ENCODE measurements at regions of chr5 and their contacts with region 1.

Region 1: GRCh38 chr5:33433303-33434240 is 7.2 kb upstream of the TARS1 start:
- DNase-seq: no peak
- ATAC-seq: no peak
- H3K4me3 ChIP-seq: no peak overlapping the region
- H3K4me3 Mint-ChIP-seq: no peak overlapping the region
- H3K27ac ChIP-seq: no peak overlapping the region
- H3K27ac Mint-ChIP-seq: no peak overlapping the region
- H3K4me1 ChIP-seq: peaks cover 0 to 3% of the 10 kb centered on the region in 2 donors
- H3K4me1 Mint-ChIP-seq: peaks cover 5% of the 10 kb centered on the region
- H3K27me3 ChIP-seq: no peaks in the 10 kb centered on the region
- H3K27me3 Mint-ChIP-seq: peaks cover 5% of the 10 kb centered on the region
- CTCF ChIP-seq: no peak

Region 2: DNA sequence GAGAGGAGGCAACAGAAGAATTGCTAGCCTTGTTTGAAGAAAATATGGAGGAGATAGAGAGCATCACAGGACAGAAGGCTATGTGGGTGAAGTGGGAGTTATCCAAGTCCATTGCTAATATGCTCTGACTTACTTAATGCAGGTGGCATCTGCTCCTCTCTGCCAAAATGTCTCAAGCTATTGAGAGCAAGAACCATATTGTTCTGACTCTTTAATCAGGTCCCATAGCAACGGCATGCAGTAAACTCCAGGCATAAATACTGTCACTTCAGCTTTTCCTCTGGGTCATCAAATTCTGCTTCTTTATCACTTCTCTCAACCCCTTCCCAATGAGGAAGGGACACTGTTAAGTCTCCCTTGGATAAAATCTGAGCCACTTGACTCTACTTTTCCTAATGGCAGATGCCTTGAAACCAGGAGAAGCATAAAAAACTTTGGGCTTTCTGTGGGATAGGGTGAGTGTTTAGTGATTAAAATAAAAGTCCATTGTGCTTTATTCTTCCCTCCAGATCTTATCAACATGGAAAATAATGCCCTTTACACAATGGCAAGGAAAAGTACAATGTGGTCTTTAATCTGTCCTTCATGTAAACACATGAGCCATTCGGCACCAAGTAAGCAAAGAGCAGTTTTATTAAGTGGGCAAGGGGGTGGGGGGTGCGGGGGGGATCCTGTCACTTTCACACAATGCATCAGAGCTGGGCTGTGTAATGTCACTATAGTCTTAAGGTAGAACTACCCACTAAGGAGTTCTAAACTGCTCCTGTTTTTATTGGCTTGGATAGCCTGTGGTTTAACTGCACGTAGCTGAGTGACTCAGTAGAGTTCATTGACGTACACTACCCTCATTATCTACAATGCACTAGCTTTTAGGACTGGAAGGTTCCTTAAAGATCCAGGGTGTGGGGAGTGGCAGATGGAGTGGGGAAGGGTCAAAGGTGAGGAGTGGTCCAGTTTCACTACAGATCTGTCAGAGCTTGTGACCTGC is 63.8 kb before region 1 on chr5:
- CTCF ChIA-PET with region 1: no interaction called
- POLR2A ChIA-PET with region 1: no interaction called
- intact Hi-C with region 1: no loop called
- DNase-seq: no peak
- ATAC-seq: no peak
- H3K4me3 ChIP-seq: no peak overlapping the region
- H3K4me3 Mint-ChIP-seq: no peak overlapping the region
- H3K27ac ChIP-seq: no peak overlapping the region
- H3K27ac Mint-ChIP-seq: no peak overlapping the region
- H3K4me1 ChIP-seq: peaks cover under 1 to 1% of the 10 kb centered on the region in 2 donors
- H3K4me1 Mint-ChIP-seq: peaks cover 3% of the 10 kb centered on the region
- H3K27me3 ChIP-seq: no peaks in the 10 kb centered on the region
- H3K27me3 Mint-ChIP-seq: no peaks in the 10 kb centered on the region
- CTCF ChIP-seq: no peak

Region 3: DNA sequence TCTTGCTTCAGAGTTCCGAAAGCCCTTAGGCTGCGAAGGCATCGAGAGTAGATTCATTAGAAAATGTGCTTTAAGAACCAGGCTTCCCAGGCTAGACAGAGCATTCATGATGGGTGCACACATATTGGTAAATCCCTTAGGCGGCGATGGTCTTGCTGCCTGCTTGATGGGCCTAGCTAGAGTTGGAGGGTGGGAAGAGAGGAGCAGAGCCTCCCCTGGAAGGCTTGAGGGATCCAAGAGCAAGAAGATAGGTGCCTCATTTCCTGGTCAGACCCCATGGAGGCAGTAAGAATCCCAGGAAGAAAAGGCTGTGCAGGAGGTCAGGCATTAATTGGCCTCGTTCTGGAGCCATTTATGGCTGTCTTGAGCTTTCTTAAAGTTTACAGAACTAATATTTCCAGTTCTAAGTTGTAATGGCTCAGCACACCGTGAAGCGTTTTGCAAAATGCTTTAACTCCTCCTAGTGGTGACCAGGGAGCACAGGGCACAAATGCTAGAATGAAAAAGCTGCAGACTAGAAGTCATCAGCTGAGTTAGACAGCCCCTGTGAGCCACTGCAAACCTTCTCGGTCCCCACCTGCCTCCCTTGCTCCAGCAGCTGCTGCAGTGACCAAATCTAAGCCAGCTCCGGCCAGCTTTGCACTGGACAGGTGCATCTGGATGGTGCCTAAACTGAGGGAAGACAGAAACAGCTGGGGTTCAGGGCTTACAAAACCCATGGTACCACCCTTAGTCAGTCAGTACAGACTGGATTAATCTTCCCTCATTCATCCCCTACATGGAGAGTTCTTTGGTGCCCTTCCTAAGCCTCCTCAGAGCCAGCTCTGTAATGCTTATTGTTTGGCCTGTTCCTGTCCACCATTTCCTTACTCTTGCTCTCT is 536.2 kb after region 1 on chr5:
- CTCF ChIA-PET with region 1: interaction called, 22 read pairs
- POLR2A ChIA-PET with region 1: no interaction called
- intact Hi-C with region 1: no loop called
- DNase-seq: peak; percentile 14
- ATAC-seq: no peak
- H3K4me3 ChIP-seq: no peak overlapping the region
- H3K4me3 Mint-ChIP-seq: no peak overlapping the region
- H3K27ac ChIP-seq: no peak overlapping the region
- H3K27ac Mint-ChIP-seq: no peak overlapping the region
- H3K4me1 ChIP-seq: no peaks in the 10 kb centered on the region
- H3K4me1 Mint-ChIP-seq: no peaks in the 10 kb centered on the region
- H3K27me3 ChIP-seq: peaks cover 0 to 5% (median 0%) of the 10 kb centered on the region in 4 experiments
- H3K27me3 Mint-ChIP-seq: peaks cover 3% of the 10 kb centered on the region
- CTCF ChIP-seq: peak; percentile 53

Region 4: DNA sequence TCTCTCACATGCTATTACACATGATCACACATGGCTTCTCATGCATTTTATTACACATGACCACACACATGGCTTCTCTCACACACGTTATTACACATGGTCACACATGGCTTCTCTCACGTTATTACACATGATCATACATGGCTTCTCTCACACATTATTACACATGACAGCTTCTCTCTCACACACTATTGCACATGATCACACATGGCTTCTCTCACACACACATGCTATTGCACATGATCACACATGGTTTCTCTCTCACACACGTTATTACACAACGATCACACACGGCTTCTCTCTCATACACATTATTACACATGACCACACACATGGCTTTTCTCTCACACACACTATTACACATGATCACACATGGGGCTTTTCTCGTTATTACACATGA is 551.9 kb after region 1 on chr5:
- CTCF ChIA-PET with region 1: no interaction called
- POLR2A ChIA-PET with region 1: no interaction called
- intact Hi-C with region 1: no loop called
- DNase-seq: no peak
- ATAC-seq: no peak
- H3K4me3 ChIP-seq: no peak overlapping the region
- H3K4me3 Mint-ChIP-seq: no peak overlapping the region
- H3K27ac ChIP-seq: no peak overlapping the region
- H3K27ac Mint-ChIP-seq: no peak overlapping the region
- H3K4me1 ChIP-seq: no peaks in the 10 kb centered on the region
- H3K4me1 Mint-ChIP-seq: no peaks in the 10 kb centered on the region
- H3K27me3 ChIP-seq: no peaks in the 10 kb centered on the region
- H3K27me3 Mint-ChIP-seq: no peaks in the 10 kb centered on the region
- CTCF ChIP-seq: no peak

Measured in B cell (primary cell).